Posterior vena cava (tissue), 2 donors: ENCODE measurements at regions of chr12 and their contacts with region 1.

Region 1: DNA sequence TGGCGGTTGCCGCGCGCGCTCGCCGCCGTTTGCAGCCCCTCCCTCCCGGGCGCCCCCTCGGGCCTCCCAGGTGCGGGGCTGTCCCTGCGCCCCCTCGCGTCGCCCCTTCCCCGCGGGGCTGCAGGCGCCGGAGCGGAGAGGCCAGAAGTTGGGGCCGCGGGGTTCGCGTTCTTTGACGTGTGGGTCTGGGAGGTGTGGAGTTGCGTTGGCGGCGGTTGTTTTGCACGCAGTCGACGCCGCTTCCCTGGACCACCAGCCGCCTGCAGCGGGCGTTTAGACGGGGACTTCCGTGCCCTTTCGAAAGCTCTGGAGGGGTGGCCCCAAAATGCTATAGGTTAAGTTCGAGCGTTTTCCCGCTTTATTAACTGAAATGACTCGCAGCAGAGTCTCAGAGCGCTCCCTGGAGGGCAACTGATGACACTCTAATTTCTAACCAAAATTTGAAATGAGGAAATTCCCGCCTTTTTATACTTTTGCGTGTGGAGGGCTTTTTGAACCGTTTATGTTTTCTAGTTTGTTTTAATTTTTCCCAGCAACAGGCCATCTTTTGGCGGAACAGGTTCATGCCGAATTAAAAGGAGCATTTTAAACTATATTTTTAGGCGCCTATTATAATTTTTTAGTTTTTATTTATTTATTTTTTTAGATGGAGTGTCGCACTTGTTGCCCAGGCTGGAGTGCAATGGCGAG is 939 bp downstream of the TMPO start:
- DNase-seq: peak; percentile 84

Region 2: DNA sequence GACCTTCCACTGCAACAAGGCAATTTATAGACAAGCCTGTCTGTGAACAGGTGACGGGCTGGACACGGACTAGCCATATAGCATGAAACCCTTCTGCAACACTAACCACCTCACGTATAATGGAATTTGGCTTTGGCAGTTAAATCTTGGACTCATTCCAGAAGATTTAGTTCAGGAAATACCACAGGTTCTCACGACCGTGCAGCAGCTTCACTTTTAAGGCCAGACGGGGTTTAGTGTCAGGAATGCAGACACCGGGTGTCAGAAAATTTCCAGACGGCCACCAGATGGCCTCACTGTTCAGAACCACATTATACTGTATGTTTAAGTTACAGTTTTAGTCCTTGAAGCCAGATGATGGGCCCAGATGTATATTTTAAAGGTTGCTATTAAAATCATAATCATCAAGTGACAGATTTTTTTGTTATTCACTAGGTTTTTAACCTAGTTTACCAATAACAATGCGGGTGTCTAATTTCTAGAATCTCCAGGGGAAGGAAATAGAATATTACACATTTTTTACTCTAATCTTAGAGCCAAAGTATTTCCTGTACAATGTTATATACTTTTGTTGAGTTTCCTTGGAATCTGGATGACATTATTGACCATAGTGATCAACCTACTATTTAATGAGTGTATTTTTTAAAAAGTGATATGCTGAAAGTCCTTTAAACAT is 91.5 kb before region 1 on chr12:
- intact Hi-C with region 1: loop called (anchors 1 to 10 kb)
- DNase-seq: no peak